Vagina (tissue), 2 donors: ENCODE measurements at regions of chr17 and their contacts with region 1.

Region 1: GRCh38 chr17:49434821-49435670 is 20.4 kb upstream of the PHB1 start:
- DNase-seq: no peak
- H3K4me3 ChIP-seq: no peak overlapping the region
- H3K27ac ChIP-seq: no peak overlapping the region
- H3K4me1 ChIP-seq: no peaks in the 10 kb centered on the region
- H3K27me3 ChIP-seq: no peaks in the 10 kb centered on the region
- CTCF ChIP-seq: peak in 2 of 3 experiments; percentile 16 to 54
- POLR2A ChIP-seq: no peak

Region 2: DNA sequence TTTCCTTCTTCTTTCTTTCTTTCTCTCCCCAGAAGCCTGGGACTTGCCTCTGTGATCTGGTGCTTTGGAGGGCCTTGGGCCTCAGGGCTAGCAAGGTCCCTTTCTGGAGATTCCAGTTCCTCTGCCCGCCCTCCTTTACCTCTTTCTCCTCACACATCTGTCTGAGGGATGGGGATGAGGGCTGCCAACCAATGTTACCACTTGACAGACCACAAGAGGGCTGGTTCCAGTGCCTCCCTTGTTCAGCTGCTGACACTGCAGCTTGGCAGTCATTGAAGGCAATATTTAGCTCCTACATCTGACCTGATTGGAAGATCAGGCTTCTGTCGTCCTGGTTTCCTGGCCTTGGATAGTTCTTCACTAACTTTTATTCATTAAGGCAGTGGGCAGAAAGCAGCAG is 69.4 kb before region 1 on chr17:
- intact Hi-C with region 1: no loop called
- DNase-seq: no peak
- H3K4me3 ChIP-seq: no peak overlapping the region
- H3K27ac ChIP-seq: no peak overlapping the region
- H3K4me1 ChIP-seq: peaks cover 7% of the 10 kb centered on the region
- H3K27me3 ChIP-seq: no peaks in the 10 kb centered on the region
- CTCF ChIP-seq: no peak
- POLR2A ChIP-seq: no peak

Region 3: DNA sequence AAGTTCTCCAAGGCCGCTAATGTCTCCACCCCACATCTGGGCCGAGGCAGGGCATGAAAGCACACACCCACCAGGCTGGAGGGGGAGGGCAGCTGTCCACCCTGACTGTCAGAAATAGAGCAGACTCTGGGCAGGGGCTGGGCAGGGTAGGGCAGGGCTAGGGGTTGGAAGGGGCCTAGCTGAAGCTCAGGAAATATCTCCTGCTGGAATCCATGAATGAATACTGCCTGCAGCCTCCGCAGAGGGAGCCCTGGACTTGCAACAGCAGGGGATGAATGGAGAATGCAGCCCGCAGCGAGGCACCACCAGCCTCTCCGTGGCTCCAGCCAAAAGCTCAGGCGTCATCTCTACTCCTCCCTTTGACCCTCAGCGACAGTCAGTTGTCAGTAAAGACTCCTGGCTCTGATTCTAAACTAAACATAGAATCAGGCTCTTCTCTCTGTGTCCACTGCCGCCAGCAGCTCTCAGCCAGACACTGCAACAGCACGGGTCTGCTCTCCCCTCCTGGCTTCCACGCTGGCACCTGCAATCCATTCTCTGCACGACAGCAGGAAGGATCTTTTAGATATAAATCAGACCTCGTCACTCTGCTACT is 36.1 kb after region 1 on chr17:
- intact Hi-C with region 1: no loop called
- DNase-seq: no peak
- H3K4me3 ChIP-seq: no peak overlapping the region
- H3K27ac ChIP-seq: no peak overlapping the region
- H3K4me1 ChIP-seq: peaks cover 14% of the 10 kb centered on the region
- H3K27me3 ChIP-seq: no peaks in the 10 kb centered on the region
- CTCF ChIP-seq: no peak
- POLR2A ChIP-seq: no peak

Region 4: GRCh38 chr17:49548506-49549310 is 113.7 kb after region 1 on chr17:
- intact Hi-C with region 1: loop called (anchors 5 kb)
- DNase-seq: peak in 1 of 2 donors; percentile 86
- H3K4me3 ChIP-seq: no peak overlapping the region
- H3K27ac ChIP-seq: no peak overlapping the region
- H3K4me1 ChIP-seq: peaks cover 14% of the 10 kb centered on the region
- H3K27me3 ChIP-seq: no peaks in the 10 kb centered on the region
- CTCF ChIP-seq: no peak
- POLR2A ChIP-seq: no peak